Astrocyte of the cerebellum (primary cell): ENCODE measurements at regions of chr1 and their contacts with region 1.

Region 1: DNA sequence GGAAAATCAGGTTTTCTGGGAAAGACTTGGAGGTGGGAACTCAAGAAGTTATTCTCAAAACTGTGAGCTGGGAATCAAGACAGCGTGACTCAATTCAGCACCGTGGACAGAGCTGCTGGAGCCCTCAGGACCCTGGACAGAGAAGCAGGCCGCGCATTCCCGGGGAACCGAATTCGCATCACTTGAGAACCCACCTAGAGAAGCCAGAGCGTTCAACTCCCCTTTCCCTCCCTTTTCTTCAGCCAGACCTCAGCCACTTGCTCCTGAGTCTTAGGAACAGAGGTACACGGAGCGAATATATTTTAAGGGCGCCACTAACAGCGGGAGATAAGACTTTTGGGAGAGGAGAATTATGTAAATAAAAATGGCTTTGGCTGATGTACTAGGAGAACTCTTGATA is 2.0 kb upstream of the LIN28A start:
- DNase-seq: peak; percentile 73
- H3K4me3 ChIP-seq: no peak overlapping the region
- CTCF ChIP-seq: no peak

Region 2: DNA sequence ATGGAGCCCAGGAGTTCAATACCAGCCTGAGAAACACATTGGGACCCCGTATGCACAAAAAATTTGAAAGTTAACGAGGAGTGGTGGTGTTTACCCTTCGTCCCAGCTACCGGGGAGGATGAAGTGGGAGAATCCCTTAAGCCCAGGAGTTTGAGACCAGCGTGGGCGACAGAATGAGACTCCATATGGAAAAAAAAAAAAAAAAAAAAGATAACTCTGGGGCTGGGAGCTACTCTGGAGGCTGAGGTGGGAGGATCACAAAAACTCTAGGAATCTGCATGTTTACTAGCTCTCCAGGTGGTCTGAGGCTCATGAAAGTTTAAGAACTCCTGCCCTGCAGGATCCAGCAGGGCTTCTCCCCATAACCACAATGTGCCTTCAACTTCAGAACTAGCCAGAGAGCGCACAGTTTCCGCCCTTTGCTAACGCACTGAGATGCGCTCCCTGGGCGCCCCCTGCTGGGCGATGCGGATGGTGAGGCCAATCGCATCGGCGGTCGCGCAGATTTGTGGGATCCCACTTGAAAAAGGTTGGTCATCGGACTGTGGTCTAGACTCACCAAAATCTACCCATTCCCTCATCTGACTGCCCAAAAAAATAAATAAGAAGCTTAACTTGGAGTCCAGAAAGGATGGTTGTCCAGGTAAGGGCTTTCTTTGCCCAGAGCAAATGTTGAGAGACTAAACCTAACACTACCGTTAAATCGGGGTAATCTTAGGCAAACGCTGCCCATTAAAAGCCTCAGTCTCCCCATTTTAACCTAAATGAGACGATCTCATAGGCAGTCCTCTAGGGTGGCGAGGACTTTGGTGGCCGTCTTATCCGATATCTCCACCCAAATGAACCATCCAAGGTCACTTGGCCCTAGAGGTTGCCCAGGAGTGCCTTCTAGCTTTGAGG is 44.8 kb before region 1 on chr1:
- in situ Hi-C with region 1: loop called (anchors 5 kb)
- DNase-seq: peak; percentile 39
- H3K4me3 ChIP-seq: no peak overlapping the region
- CTCF ChIP-seq: peak; percentile 95